Right ventricle myocardium superior (tissue), 1 donor: ENCODE measurements at regions of chr11 and their contacts with region 1.

Region 1: GRCh38 chr11:61446211-61446651 is 16.3 kb downstream of the SDHAF2 start:
- DNase-seq: peak; percentile 95
- ATAC-seq: peak; percentile 88

Region 2: DNA sequence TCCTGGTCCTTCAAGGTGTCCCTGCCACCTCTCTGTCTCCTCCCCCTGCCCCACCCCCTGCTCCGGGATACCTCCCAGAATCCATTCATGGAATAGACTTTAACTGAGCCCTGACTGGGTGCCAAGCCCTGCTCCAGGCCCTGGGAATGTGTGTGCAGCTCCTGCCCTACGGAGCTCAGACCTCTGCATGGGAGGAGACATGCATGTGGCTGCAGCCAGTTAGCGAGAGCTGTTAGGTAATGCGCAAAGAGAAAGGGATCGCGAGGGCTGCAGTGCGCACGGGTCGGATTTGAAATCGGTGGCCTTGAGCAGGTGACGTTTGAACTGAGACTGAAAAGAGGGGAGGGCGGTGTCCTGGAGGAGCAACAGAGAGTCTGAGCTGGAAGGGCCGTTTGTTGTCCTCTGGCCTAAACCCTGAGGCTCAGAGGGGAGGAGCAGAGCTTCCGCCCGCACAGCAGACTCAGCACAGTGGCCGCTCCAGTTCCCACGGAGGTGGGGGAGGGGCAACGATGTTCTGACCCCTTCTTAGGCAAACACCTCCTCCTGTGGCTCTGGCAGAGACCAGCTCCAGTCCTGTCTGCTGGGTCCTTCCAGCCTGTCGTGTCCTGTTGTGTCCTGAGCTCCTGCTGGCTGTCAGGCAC is 42.5 kb after region 1 on chr11:
- intact Hi-C with region 1: no loop called
- DNase-seq: peak; percentile 81
- ATAC-seq: peak; percentile 77

Region 3: GRCh38 chr11:61509043-61510029 is 63.1 kb after region 1 on chr11:
- intact Hi-C with region 1: loop called (anchors 10 kb)
- DNase-seq: peak; percentile 80
- ATAC-seq: peak; percentile 94

Region 4: DNA sequence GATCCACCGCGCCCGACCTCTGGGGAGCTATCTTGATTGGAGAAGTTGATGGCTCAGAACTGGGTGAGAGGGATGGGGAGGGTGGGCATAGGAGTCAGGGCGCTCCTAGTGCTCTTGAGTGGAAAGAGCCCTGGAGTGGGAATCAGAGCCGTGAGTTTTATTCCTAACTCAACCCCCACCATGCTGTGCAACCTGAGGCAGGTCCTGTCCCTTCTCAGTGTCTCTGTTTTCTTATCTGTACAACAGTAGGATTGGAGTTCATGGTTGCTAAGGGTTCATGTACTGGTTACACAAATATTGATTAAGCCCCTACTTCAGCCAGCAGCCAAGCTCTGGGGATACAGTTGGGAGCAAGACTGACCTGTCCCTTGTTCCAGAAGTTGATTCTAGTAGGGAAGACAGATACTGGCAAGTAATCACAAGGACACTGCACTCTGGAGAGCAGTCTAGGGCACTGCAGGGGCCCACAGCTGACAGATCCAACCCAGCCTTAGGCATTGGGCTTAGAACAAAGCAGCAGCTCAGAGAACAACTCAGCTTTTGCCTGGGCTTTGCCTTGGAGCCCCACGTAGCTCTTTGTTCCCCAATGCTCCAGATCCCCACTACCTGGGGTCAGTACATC is 221.6 kb after region 1 on chr11:
- intact Hi-C with region 1: no loop called
- DNase-seq: no peak
- ATAC-seq: peak; percentile 15

Region 5: GRCh38 chr11:61728940-61729219 is 282.6 kb after region 1 on chr11:
- intact Hi-C with region 1: no loop called
- DNase-seq: no peak
- ATAC-seq: no peak

Region 6: DNA sequence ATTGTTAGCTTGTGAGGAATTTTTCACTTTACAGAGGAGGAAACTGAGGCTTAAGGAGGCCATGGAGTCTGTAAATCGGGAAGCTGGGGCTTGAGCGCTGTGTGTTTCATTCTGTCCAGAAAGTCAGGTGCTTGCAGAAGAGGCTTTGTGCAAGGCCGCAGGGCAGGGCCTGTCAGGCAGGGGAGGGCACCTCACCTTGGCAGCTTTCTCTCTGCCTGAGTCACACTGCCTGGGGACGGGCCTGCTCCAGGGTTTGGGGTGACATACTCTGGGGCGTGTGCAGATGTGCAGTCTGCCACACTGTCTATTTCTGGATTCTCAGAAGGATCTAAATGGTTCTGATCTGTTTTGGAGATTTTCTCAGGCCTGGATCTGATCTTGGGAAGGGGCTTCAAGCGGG is 686.0 kb after region 1 on chr11:
- intact Hi-C with region 1: no loop called
- DNase-seq: peak; percentile 19
- ATAC-seq: no peak